Endothelial cell of umbilical vein (primary cell): ENCODE measurements at regions of chr10 and their contacts with region 1.

Region 1: DNA sequence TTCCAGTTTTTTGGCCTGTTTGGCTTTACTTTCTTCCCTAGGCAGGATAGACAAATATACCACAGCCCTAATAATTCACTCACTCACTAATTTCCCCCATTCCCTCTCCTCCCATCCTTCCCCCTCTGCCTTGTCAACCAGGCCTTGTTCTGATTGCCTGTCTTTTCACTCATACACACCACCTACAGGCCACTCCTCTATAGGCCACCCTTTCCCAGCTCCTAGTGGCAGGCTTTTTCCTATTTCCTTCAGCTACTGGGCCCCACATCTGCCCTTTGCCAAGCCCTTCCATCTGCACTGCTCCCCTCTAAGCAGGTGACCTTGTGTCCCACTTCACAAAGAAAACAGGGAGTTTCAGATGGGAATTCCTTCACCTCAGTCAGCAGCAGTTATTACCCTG is 59.8 kb upstream of the MSRB2 start:
- DNase-seq: no peak
- H3K4me3 ChIP-seq: no peak overlapping the region
- H3K27ac ChIP-seq: no peak overlapping the region
- H3K4me1 ChIP-seq: no peaks in the 10 kb centered on the region
- H3K27me3 ChIP-seq: peaks cover 4 to 5% of the 10 kb centered on the region in 2 experiments
- CTCF ChIP-seq: peak in 1 of 2 donors; percentile 8
- POLR2A ChIP-seq: no peak

Region 2: DNA sequence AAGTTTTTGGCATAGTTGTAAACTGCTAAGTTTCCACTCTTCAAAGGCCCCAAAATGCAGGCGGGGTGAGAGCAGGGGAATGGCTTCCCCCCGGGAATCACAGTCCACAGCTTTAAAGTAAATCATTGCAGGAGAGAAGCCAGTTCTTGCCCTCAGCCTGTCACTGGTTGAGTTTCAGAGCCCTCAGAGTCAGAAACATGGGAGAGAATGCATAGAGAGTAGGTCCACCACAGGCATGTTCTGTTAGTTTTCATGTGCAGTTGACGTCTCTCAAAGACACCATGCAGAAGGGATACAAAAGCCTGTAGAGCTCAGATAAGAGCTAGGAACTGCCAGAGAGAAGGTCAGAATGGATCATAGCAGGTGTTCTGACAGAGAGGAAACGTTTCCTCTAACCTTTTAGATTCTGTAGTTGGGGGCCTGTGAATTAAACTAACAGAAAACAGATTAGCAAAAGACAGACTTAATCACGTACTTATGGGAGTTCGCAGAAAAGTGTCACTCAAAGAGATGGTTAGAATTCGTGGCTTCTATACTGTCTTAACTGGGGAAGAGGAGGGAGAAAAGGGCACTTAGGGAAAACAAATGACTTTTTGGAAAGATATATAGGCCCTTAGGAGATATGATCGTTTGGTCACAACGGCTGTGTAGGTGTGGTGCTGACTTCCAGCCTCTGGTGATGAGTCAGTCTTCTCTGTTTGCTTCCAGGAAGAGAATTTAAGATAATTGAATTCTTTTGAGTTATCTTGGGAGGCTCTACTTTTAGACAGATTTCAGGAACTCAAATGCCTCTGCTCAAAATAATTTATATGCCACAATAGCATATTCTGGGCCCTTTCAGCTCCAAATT is 11.9 kb after region 1 on chr10:
- CTCF ChIA-PET with region 1: interaction called, 10 read pairs
- POLR2A ChIA-PET with region 1: no interaction called
- dilution Hi-C with region 1: no loop called
- intact Hi-C with region 1: no loop called
- DNase-seq: no peak
- H3K4me3 ChIP-seq: no peak overlapping the region
- H3K27ac ChIP-seq: no peak overlapping the region
- H3K4me1 ChIP-seq: no peaks in the 10 kb centered on the region
- H3K27me3 ChIP-seq: no peaks in the 10 kb centered on the region
- CTCF ChIP-seq: no peak
- POLR2A ChIP-seq: no peak